ENCODE measurements at regions of chr10 and their contacts with region 1.

Region 1: GRCh38 chr10:70758757-70759514 is 26.2 kb downstream of the TBATA start:
- DNase-seq: peak; percentile 51 to 77
- H3K4me3 ChIP-seq: no peak overlapping the region
- H3K27ac ChIP-seq: no peak overlapping the region
- H3K4me1 ChIP-seq: peaks cover 0 to 14% (median 2%) of the 10 kb centered on the region in 4 donors
- H3K27me3 ChIP-seq: peaks cover 0 to 9% of the 10 kb centered on the region in 2 donors
- CTCF ChIP-seq: peak; percentile 65 to 70

Region 2: GRCh38 chr10:70461215-70461986 is 297.5 kb before region 1 on chr10:
- intact Hi-C with region 1: loop called (anchors 10 kb)
- DNase-seq: peak in 1 of 2 donors; percentile 54
- H3K4me3 ChIP-seq: no peak overlapping the region
- H3K27ac ChIP-seq: peak overlapping the region; percentile 41 to 89
- H3K4me1 ChIP-seq: peaks cover 0 to 51% (median 41%) of the 10 kb centered on the region in 4 donors
- H3K27me3 ChIP-seq: no peaks in the 10 kb centered on the region
- CTCF ChIP-seq: peak; percentile 88 to 89

Region 3: GRCh38 chr10:70508912-70509756 is 249.8 kb before region 1 on chr10:
- intact Hi-C with region 1: no loop called
- DNase-seq: peak; percentile 44 to 81
- H3K4me3 ChIP-seq: no peak overlapping the region
- H3K27ac ChIP-seq: peak overlapping the region in 1 of 2 donors; percentile 16
- H3K4me1 ChIP-seq: peaks cover 0 to 47% (median 37%) of the 10 kb centered on the region in 4 donors
- H3K27me3 ChIP-seq: no peaks in the 10 kb centered on the region
- CTCF ChIP-seq: no peak

Region 4: GRCh38 chr10:70549962-70550458 is 208.9 kb before region 1 on chr10:
- intact Hi-C with region 1: loop called (anchors 5 kb)
- DNase-seq: peak; percentile 65 to 76
- H3K4me3 ChIP-seq: no peak overlapping the region
- H3K27ac ChIP-seq: no peak overlapping the region
- H3K4me1 ChIP-seq: peaks cover 0 to 9% (median 5%) of the 10 kb centered on the region in 4 donors
- H3K27me3 ChIP-seq: no peaks in the 10 kb centered on the region
- CTCF ChIP-seq: peak; percentile 88 to 90

Measured in tibial artery (tissue), 4 donors.